Thyroid gland (tissue), 4 donors: ENCODE measurements at regions of chr1 and their contacts with region 1.

Region 1: DNA sequence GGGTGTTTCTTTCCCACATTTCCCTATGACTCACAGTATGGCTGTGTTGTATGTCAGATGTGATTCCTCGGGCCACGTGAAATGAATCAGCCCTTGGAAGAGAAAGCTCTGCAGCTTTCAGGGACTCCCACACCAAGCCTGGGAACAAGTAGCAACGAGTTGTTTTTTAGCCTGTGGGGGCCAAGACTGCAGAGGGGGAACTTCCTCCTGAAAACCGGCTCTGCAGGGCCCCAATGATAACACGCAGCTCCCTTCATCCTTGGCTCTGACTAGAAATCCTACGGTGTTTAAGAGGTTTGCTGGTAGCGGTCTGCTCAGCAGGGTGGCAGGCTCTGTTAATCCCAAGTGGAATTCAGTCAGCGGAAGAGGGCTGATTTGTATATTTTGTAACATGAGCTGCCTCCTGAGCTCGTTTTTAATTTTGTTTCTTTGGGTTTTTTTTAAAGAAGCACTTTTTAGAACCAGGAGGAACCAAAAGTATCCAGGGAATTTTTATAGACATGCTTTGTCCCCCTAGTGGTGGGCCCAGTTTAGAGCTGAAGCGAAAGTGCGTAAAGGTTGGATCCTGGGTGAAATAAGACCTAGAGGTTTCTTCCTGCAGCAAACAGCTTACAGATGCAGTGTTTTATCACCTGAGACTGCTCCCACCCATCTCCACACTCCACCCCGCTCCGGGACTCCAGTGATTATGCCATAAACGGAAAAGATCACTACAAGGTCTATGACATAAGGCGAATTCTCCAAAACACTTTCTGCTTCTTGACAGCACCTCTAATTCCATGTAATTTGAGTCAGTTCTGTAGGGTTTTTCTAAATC is 48.8 kb downstream of the LAMC2 start:
- DNase-seq: peak; percentile 87 to 88
- H3K4me3 ChIP-seq: no peak overlapping the region
- H3K27ac ChIP-seq: peak overlapping the region; percentile 89 to 94 (median 91)
- H3K4me1 ChIP-seq: peaks cover 14 to 16% of the 10 kb centered on the region in 2 donors
- H3K27me3 ChIP-seq: no peaks in the 10 kb centered on the region
- CTCF ChIP-seq: peak; percentile 55 to 80 (median 68)
- POLR2A ChIP-seq: peak in 1 of 2 donors; percentile 50

Region 2: GRCh38 chr1:182955596-182956588 is 279.0 kb before region 1 on chr1:
- intact Hi-C with region 1: loop called (anchors 5 kb)
- DNase-seq: no peak
- H3K4me3 ChIP-seq: no peak overlapping the region
- H3K27ac ChIP-seq: no peak overlapping the region
- H3K4me1 ChIP-seq: peaks cover 0 to 8% of the 10 kb centered on the region in 2 donors
- H3K27me3 ChIP-seq: peaks cover 10% of the 10 kb centered on the region
- CTCF ChIP-seq: no peak
- POLR2A ChIP-seq: no peak

Region 3: DNA sequence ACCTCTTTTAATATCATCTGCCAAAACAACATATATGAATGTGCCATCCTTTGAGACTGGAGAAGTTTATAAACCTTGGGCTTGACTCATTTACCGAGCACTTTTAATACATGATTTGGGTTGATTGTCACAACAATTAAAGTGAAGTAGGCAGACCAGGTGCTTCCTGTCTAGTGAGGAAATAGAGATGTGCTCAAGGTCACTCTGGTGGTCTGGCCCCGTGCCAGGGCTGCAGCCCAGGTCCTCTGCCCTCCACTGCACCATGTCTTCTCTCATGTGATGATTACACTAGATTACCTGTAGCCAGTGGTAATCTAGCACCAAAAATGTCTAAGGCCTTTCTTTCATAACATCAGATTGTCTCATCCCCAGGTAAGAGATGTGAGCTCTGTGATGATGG is 110.6 kb before region 1 on chr1:
- intact Hi-C with region 1: no loop called
- DNase-seq: peak; percentile 48 to 60
- H3K4me3 ChIP-seq: no peak overlapping the region
- H3K27ac ChIP-seq: peak overlapping the region in 1 of 3 donors; percentile 60
- H3K4me1 ChIP-seq: peaks cover 9 to 25% of the 10 kb centered on the region in 2 donors
- H3K27me3 ChIP-seq: no peaks in the 10 kb centered on the region
- CTCF ChIP-seq: no peak
- POLR2A ChIP-seq: no peak

Region 4: DNA sequence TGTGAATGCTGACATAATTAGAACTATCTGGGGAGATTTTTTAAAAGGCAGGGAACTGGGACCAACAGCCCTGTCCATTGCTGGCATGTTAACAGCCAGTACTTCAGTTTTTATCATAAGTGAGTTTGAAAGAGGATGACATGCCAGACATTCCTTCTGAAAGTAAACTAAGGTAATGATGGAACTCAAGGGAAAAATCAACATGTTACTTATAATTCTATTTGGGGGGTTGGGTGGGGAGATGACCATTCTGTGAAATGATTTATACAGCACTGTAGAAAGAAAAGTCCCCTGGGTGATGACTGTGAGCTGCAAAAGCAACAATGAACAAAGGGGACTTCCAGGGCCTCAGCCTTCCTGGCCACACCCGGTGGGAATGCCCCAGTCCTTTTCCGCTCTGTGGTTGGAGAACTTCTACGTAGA is 54.2 kb before region 1 on chr1:
- intact Hi-C with region 1: loop called (anchors 10 kb)
- DNase-seq: peak; percentile 69 to 79
- H3K4me3 ChIP-seq: no peak overlapping the region
- H3K27ac ChIP-seq: peak overlapping the region; percentile 86 to 91 (median 88)
- H3K4me1 ChIP-seq: peaks cover 28 to 29% of the 10 kb centered on the region in 2 donors
- H3K27me3 ChIP-seq: no peaks in the 10 kb centered on the region
- CTCF ChIP-seq: no peak
- POLR2A ChIP-seq: peak in 1 of 2 donors; percentile 0